ENCODE measurements at regions of chr20 and their contacts with region 1.

Region 1: DNA sequence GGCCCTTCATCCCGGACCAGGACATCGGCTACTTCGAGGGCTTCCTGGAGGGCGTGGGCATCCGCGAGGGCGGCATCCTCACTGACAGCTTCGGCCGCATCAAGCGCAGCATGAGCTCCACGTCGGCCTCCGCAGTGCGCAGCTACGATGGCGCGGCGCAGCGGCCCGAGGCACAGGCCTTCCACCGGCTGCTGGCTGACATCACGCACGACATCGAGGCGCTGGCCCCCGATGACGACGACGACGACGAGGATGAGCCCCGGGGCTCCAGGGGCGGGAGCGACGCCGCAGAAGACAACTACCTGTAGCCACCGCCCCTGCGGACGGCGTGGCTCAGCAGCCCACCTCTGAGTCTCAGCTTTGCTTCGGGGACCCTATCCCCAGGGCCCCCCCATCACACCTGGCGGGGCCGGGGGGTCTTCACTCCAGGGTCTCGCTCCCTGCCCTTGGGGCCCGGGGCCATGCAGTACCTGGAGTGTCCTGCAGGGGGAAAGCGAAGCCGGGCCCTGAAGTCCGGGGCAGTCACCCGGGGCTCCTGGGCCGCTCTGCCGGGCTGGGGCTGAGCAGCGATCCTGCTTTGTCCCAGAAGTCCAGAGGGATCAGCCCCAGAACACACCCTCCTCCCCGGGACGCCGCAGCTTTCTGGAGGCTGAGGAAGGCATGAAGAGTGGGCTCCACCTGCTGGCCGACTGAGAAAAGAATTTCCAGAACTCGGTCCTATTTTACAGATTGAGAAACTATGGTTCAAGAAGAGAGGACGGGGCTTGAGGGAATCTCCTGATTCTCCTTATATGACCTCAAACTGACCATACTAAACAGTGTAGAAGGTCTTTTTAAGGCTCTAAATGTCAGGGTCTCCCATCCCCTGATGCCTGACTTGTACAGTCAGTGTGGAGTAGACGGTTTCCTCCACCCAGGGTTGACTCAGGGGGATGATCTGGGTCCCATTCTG is 20.8 kb upstream of the HCK start:
- DNase-seq: peak; percentile 84
- H3K4me3 Mint-ChIP-seq: peak overlapping the region; percentile 27
- H3K27ac Mint-ChIP-seq: no peak overlapping the region
- H3K4me1 Mint-ChIP-seq: no peaks in the 10 kb centered on the region
- H3K27me3 Mint-ChIP-seq: peaks cover 39% of the 10 kb centered on the region

Region 2: GRCh38 chr20:31849455-31849925 is 181.8 kb before region 1 on chr20:
- intact Hi-C with region 1: loop called (anchors 5 kb)
- DNase-seq: no peak
- H3K4me3 Mint-ChIP-seq: no peak overlapping the region
- H3K27ac Mint-ChIP-seq: no peak overlapping the region
- H3K4me1 Mint-ChIP-seq: no peaks in the 10 kb centered on the region
- H3K27me3 Mint-ChIP-seq: peaks cover 12% of the 10 kb centered on the region

Region 3: DNA sequence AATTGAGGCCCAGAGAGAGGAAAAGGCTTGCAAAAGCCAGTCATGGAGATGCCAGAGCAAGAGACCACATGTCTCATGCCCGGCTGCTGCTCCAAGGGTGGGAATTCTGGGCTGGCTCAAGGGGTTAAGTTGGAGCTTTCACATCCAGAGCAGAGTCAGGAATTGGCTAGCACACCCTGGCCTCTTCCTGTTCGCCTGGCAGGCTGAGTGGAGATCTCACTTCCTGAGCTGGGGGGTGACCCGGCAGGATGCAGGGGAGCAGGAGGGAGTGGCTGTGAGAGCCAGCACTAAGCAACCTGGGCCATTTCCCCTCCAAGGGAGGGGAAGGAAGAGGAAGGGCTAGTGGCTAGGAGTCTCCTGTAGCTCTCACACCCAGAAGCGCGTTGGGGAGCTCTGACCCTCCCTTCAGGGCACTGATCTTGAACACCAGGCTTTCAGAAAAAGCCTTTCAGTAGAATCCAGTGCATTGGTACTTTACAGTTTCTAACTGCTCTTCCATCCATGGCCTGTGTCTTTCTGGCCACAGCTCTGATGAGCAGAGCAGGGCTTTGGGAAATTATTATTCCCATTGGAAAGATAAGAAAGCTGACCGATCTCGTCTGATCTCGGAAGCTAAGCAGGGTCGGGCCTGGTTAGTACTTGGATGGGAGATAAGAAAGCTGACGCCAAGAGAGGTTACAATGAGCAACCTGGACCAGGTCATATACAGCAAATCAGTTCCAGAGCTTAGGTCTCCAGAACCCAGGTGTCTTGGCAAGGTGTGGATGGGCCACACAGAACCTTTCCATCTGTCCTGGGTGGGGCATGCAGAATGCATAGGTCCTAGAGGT is 23.3 kb before region 1 on chr20:
- intact Hi-C with region 1: no loop called
- DNase-seq: no peak
- H3K4me3 Mint-ChIP-seq: no peak overlapping the region
- H3K27ac Mint-ChIP-seq: no peak overlapping the region
- H3K4me1 Mint-ChIP-seq: peaks cover 6% of the 10 kb centered on the region
- H3K27me3 Mint-ChIP-seq: peaks cover 7% of the 10 kb centered on the region

Measured in activated CD4-positive, alpha-beta T cell treated with anti-CD3 and anti-CD28 coated beads, Interleukin-2, amount 10 ng/mL, durations not matched to agents 24 days and 14 days (primary cell).